OCI-LY7 (cell line): ENCODE measurements at regions of chr16 and their contacts with region 1.

Region 1: GRCh38 chr16:53083119-53083518 is 28.3 kb downstream of the CHD9 start:
- DNase-seq: no peak
- H3K4me3 ChIP-seq: no peak overlapping the region
- H3K27ac ChIP-seq: no peak overlapping the region
- H3K4me1 ChIP-seq: peaks cover 32% of the 10 kb centered on the region
- CTCF ChIP-seq: no peak

Region 2: DNA sequence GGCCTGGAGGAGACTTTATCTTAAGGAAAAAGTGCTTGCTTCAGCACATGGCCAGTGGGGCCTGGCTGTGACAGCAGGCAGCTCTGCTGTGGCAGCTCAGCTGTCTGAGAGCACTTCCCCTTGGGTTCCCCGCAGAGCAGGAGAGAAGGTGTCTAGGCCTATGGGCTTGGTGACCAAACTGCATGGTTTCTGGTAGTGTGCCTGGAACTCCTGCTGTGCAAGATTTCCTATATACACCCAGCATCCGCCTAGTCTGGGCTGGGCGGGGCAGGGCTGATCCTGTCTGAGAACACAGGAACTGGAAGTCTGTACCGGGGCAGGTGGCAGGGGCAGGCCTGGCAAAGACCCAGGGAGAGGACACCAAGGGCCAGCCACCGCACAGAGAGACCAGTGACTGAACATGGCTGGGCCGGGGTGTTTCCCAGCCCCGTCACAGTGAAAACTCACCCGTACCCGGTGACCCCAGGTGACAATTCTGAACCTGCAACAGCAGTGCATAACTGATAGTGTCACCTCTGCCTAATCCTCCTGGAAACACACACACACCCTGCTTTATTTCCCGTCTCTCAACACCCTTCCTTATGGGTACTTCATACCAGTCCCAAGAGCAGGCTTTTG is 11.0 kb after region 1 on chr16:
- CTCF ChIA-PET with region 1: no interaction called
- POLR2A ChIA-PET with region 1: interaction called, 10 read pairs
- intact Hi-C with region 1: no loop called
- DNase-seq: peak; percentile 71
- H3K4me3 ChIP-seq: peak overlapping the region; percentile 32
- H3K27ac ChIP-seq: peak overlapping the region; percentile 79
- H3K4me1 ChIP-seq: peaks cover 91% of the 10 kb centered on the region
- CTCF ChIP-seq: no peak